Mammary epithelial cell (primary cell): ENCODE measurements at regions of chr1 and their contacts with region 1.

Region 1: GRCh38 chr1:115976062-115976920 is at the start of gene SLC22A15:
- DNase-seq: peak; percentile 55
- H3K4me3 ChIP-seq: peak within 1 kb of the TSS; percentile 71 to 79 (median 74)
- H3K27ac ChIP-seq: peak within 1 kb of the TSS; percentile 90
- H3K4me1 ChIP-seq: peaks cover 22% of the 10 kb centered on the region
- H3K27me3 ChIP-seq: no peaks in the 10 kb centered on the region
- CTCF ChIP-seq: no peak
- total RNA-seq, gene SLC22A15: 43.6 to 51.2 TPM

Region 2: GRCh38 chr1:115624859-115625258 is 351.4 kb before region 1 on chr1:
- CTCF ChIA-PET with region 1: no interaction called
- dilution Hi-C with region 1: no loop called
- in situ Hi-C with region 1: loop called in 1 of 2 experiments (anchors 25 kb)
- intact Hi-C with region 1: no loop called
- DNase-seq: no peak
- H3K4me3 ChIP-seq: no peak overlapping the region
- H3K27ac ChIP-seq: no peak overlapping the region
- H3K4me1 ChIP-seq: no peaks in the 10 kb centered on the region
- H3K27me3 ChIP-seq: no peaks in the 10 kb centered on the region
- CTCF ChIP-seq: peak in 1 of 2 donors; percentile 29

Region 3: GRCh38 chr1:115782571-115783281 is 193.6 kb before region 1 on chr1:
- CTCF ChIA-PET with region 1: no interaction called
- dilution Hi-C with region 1: no loop called
- in situ Hi-C with region 1: no loop called
- intact Hi-C with region 1: loop called (anchors 1 kb)
- DNase-seq: peak; percentile 97
- H3K4me3 ChIP-seq: no peak overlapping the region
- H3K27ac ChIP-seq: peak overlapping the region; percentile 97
- H3K4me1 ChIP-seq: peaks cover 31% of the 10 kb centered on the region
- H3K27me3 ChIP-seq: no peaks in the 10 kb centered on the region
- CTCF ChIP-seq: no peak

Region 4: GRCh38 chr1:115877511-115877910 is 98.8 kb before region 1 on chr1:
- CTCF ChIA-PET with region 1: no interaction called
- dilution Hi-C with region 1: no loop called
- in situ Hi-C with region 1: no loop called
- intact Hi-C with region 1: loop called (anchors 2 kb)
- DNase-seq: peak; percentile 89
- H3K4me3 ChIP-seq: no peak overlapping the region
- H3K27ac ChIP-seq: no peak overlapping the region
- H3K4me1 ChIP-seq: peaks cover 28% of the 10 kb centered on the region
- H3K27me3 ChIP-seq: no peaks in the 10 kb centered on the region
- CTCF ChIP-seq: peak in 1 of 2 donors; percentile 5